ENCODE measurements at regions of chr4 and their contacts with region 1.

Region 1: DNA sequence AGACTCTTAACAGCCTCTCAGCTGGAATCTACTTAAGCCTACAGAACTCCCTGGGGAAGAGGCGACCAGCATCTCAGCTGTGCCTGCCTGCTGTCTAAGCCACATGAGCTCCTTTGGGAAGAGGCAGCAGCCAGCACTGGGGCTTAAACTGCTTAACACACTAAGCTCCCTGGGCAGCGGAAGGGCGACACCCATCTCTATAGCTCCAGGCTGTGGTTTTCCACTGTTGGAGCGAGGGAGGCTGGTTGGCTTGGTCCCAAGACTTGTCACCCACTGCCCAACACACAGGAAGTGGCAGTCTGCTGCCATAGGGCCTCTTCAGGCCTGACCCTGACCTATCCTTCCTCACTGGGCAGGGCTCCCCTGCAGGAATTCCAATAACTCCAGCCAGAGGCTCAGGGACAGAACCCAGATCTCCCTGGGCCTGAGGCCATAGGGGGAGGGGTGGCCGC is 1544.1 kb upstream of the ADGRL3 start:
- DNase-seq: no peak
- H3K4me3 ChIP-seq: no peak overlapping the region
- H3K27ac ChIP-seq: no peak overlapping the region
- H3K4me1 ChIP-seq: no peaks in the 10 kb centered on the region
- H3K27me3 ChIP-seq: no peaks in the 10 kb centered on the region
- CTCF ChIP-seq: no peak
- POLR2A ChIP-seq: no peak

Region 2: GRCh38 chr4:59247032-59247431 is 409.0 kb before region 1 on chr4:
- intact Hi-C with region 1: loop called (anchors 5 kb)
- DNase-seq: no peak
- H3K4me3 ChIP-seq: no peak overlapping the region
- H3K27ac ChIP-seq: no peak overlapping the region
- H3K4me1 ChIP-seq: no peaks in the 10 kb centered on the region
- H3K27me3 ChIP-seq: no peaks in the 10 kb centered on the region
- CTCF ChIP-seq: no peak
- POLR2A ChIP-seq: no peak

Measured in breast epithelium (tissue), 4 donors.